Activated CD4-positive, alpha-beta memory T cell treated with anti-CD3 and anti-CD28 coated beads for 36 hours (primary cell): ENCODE measurements at regions of chr22 and their contacts with region 1.

Region 1: DNA sequence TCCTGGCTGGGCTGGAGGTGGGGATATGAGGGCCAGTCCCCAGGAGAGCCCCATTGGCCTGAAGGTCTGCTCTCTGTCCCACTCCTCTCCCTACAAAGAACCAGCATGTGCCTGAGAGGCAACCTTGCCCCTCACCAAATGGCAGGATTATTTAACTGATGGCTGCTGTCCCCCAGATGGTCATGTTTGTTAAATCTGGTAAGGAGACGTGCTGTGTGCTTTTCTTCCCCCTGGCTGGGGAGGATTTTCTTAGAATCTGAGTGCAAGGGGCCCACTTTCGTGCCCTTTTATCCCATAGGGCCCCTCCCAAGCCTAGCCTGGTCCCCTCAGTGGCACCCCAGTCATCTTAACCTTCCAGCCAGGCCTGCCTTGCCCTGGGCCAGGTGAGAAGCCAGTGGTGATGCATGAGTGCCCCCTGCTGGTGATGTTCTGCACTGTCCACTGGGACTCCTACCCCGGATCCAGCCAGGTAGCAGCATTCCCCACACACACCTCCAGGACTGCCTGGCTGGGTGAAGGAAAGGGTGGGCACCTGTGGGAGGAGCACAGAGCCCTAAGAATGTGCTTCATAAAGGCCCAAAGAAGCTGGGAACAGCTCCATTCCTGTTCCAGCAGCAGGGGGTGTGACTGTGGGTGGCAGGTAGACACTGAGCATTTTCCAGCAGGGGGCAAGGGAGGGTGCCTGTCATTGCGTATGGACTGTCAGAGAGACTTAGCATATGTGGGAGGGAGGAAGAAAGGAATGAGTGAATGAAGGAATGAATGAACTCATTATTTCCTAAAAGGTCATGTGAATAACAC is 28.9 kb downstream of the MFNG start:
- DNase-seq: peak; percentile 89
- H3K4me3 Mint-ChIP-seq: no peak overlapping the region
- H3K27ac Mint-ChIP-seq: no peak overlapping the region
- H3K4me1 Mint-ChIP-seq: no peaks in the 10 kb centered on the region
- H3K27me3 Mint-ChIP-seq: no peaks in the 10 kb centered on the region

Region 2: DNA sequence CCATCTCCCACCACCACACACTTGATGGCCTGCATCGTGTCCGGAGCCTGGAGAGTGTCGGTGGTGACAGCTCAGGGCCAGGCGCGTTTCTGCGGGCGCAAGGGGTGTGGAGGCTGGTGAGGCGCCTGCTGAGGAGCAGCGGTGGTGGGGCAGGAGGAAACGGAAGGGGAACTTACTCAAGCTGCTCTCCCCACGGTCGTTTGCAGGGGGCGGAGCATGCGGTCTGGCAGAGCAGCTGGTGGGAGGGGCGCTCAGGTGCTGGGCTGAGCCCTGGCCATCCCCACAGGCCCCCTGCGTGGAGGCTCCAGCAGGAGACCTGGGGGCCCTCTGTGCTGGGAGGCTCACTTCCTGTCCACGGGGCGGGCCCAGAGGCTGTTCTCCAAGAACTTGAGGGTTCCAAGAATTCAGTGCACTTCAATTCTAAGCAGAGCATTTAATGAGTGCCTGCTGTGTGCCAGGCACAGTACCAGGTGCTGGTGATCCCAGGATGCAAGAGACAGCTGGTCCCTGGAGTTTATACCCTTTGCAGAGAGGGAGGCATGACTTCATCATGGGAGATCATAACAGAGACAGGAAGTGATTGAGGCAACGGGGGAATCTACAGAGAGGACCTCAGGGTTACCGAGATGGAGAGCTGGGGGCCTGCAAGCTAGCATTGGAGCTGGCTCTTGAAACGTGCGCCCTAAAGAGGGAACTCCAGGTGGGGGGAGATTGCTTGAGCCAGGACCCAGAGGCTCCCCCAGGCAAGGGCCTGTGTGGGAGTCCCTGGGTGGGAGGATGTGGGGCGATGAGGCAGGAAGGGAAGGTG is 213.0 kb before region 1 on chr22 and contains the start of gene RAC2:
- CTCF ChIA-PET with region 1: interaction called, 11 read pairs
- POLR2A ChIA-PET with region 1: no interaction called
- intact Hi-C with region 1: no loop called
- DNase-seq: peak; percentile 96
- H3K4me3 Mint-ChIP-seq: peak within 1 kb of the TSS; percentile 99
- H3K27ac Mint-ChIP-seq: peak within 1 kb of the TSS; percentile 99
- H3K4me1 Mint-ChIP-seq: peaks cover 42% of the 10 kb centered on the region
- H3K27me3 Mint-ChIP-seq: no peaks in the 10 kb centered on the region
- total RNA-seq, gene RAC2: 714 to 727 TPM

Region 3: GRCh38 chr22:37309211-37310074 is 147.8 kb before region 1 on chr22:
- CTCF ChIA-PET with region 1: interaction called, 38 read pairs
- POLR2A ChIA-PET with region 1: no interaction called
- intact Hi-C with region 1: no loop called
- DNase-seq: peak; percentile 73
- H3K4me3 Mint-ChIP-seq: no peak overlapping the region
- H3K27ac Mint-ChIP-seq: peak overlapping the region; percentile 59
- H3K4me1 Mint-ChIP-seq: peaks cover 84% of the 10 kb centered on the region
- H3K27me3 Mint-ChIP-seq: no peaks in the 10 kb centered on the region

Region 4: DNA sequence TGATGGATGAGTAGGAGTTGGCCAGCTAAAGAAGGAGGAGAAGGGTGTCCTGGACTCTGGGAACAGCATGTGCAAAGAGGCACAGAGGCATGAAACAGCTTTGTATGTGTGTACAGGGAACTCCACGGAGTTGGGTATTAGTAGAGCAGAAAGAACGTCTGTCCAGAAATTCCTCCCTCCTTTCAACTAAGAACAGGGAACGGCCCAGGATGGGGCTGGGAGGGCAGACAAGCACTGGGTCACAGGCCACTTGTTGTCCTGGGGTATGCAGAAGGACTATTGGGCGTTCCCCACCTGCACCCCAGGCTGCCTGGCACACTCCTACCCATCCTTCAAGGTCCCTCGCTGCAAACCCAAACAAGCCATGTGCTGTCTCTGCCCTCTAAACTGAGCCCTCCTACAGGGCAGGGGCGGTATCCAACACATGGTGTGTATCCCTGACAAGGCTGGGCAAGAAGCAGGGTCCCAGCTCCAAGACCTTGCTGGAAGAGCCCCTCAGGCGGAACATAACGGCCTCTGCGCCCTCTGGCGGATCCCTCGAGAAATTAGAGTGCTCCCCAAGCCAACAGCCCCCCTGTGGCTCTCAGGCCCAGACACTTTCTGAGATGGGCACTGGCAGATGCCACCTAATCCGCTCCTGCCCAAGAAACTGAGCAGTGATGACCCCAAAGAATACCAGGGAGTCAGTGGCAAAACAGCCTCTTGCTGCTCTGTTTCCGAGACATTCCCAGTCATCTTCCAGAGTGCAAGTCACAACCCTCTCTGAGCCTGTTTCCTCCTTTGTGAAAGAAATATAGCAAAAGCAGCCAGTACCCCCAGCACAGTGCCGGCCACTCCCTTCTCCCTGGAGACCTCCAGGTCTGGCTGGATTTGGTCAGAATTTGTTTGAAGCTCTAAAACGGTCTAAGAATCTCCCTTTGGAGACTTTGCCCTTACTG is 28.4 kb before region 1 on chr22:
- CTCF ChIA-PET with region 1: interaction called, 23 read pairs
- POLR2A ChIA-PET with region 1: no interaction called
- intact Hi-C with region 1: no loop called
- DNase-seq: peak; percentile 66
- H3K4me3 Mint-ChIP-seq: no peak overlapping the region
- H3K27ac Mint-ChIP-seq: no peak overlapping the region
- H3K4me1 Mint-ChIP-seq: peaks cover 27% of the 10 kb centered on the region
- H3K27me3 Mint-ChIP-seq: peaks cover 55% of the 10 kb centered on the region

Region 5: DNA sequence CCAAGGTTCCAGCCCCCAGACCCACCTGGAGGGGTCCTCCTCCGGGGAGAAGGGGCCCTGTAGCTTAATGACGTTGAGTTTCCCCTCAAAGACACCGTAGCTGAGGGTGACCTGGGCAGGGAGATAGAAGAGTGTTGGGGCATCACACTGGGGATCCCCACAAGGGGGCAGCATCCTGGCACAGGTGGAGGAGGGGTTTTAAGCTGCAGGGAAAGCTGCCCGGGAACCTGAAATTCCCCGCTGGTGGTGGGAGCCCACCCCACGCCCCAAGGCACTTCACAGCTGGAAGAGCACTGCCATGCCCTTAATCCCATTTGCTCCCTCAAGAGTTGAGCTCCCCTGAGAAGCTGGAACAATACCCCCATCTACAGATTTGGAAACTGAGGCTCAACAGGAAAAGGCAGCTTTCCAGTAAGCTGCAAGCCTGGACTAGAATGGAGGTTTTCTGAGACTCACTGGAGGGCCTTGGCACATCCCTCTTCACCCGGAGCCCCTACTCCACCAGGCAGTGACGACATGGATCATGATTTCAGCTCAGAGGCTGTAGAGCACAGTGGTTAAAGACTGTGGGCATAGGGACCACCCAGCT is 15.2 kb after region 1 on chr22:
- CTCF ChIA-PET with region 1: interaction called, 27 read pairs
- POLR2A ChIA-PET with region 1: no interaction called
- intact Hi-C with region 1: no loop called
- DNase-seq: peak; percentile 52
- H3K4me3 Mint-ChIP-seq: no peak overlapping the region
- H3K27ac Mint-ChIP-seq: peak overlapping the region; percentile 49
- H3K4me1 Mint-ChIP-seq: no peaks in the 10 kb centered on the region
- H3K27me3 Mint-ChIP-seq: no peaks in the 10 kb centered on the region